Ascending aorta (tissue), 2 donors: ENCODE measurements at regions of chr11 and their contacts with region 1.

Region 1: GRCh38 chr11:63635762-63636465 is 21.7 kb upstream of the PLAAT3 start:
- DNase-seq: no peak
- H3K4me3 ChIP-seq: no peak overlapping the region
- H3K27ac ChIP-seq: no peak overlapping the region
- H3K4me1 ChIP-seq: no peaks in the 10 kb centered on the region
- H3K27me3 ChIP-seq: no peaks in the 10 kb centered on the region
- CTCF ChIP-seq: peak; percentile 54 to 74 (median 60)

Region 2: DNA sequence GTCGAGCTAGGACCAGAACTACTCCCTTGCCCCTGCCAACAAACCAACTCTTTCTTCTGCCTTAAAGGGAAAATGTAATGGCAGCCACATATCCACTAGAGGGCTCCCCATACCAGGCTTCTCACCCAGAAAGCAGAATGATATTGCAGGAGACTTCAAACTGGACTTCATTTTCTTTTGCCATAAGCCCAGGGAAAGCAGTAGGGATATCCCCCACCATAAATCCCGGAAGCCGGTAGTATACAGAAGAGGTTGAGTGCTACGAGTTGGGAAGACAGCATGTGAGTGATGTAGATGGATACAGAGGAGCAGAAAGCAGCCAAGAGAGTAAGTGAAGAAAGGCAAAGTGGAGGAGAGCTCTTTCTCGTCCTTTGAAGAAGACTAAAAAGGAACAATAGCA is 157.0 kb before region 1 on chr11:
- intact Hi-C with region 1: loop called (anchors 2 kb)
- DNase-seq: peak in 1 of 2 donors; percentile 68
- H3K4me3 ChIP-seq: no peak overlapping the region
- H3K27ac ChIP-seq: no peak overlapping the region
- H3K4me1 ChIP-seq: peaks cover 0 to 5% of the 10 kb centered on the region in 2 donors
- H3K27me3 ChIP-seq: no peaks in the 10 kb centered on the region
- CTCF ChIP-seq: peak; percentile 80 to 89 (median 87)

Region 3: DNA sequence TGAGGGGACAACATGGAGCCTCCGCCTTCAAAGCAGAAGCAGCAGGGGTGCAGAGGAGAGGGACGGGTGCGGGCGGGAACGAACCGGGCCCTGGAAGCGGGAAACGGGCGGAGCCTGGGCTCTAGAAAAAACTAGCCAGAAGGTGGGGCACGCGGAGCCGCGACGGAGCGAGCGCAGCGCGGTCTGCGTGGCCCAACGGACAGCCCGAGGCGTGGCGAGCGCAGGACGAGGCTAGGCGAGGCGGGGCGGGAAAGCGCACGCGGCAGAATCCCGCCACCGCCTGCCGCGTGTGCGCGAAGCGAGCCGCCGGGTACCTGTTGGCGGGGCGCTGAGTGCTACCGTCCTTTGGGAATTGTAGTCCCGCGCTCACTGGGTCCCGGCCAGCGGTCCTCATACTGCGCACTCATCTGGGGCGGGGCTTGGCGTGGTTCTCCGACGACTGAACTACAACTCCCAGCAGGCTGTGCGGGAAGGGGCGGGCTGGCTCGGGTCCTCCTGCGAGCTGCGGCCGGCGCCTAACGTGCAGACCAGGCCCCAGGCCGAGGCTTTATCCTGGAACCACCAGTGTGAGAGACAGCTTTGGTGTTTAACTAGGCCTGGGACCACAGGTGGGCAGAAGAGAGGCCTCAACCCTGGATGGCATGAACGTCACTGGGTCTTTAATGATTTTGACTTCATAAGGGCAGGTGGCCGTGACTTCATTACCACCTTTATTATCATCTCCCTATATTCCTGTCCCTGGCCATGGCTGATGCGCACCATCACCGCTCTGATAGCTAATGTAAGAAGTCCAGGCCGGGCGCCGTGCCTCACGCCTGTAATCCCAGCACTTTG is 35.6 kb after region 1 on chr11 and contains the start of gene ATL3:
- intact Hi-C with region 1: no loop called
- DNase-seq: peak; percentile 89 to 99
- H3K4me3 ChIP-seq: peak within 1 kb of the TSS; percentile 93 to 95
- H3K27ac ChIP-seq: peak within 1 kb of the TSS; percentile 100
- H3K4me1 ChIP-seq: peaks cover 13 to 36% of the 10 kb centered on the region in 2 donors
- H3K27me3 ChIP-seq: no peaks in the 10 kb centered on the region
- CTCF ChIP-seq: peak in 1 of 3 experiments; percentile 20
- total RNA-seq, gene ATL3: 77.3 TPM